ENCODE measurements at regions of chr16 and their contacts with region 1.

Region 1: DNA sequence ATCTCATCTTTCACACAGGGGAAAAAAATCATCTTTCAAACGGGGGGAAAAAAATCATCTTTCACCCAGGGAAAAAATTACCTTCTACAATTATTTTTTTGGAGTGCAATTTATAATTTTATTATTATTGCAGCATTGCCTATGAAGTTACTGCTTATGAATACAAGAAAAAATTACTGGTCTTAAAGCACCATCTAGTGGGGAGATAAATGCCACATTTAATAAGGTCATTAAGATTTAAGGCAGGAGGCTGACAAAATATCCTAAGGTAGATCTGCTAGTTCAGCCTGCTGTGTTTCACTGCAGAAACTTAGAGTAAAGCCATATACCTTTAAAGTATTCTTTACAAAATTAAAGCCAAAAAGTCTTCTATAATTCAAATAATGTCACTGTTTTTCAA is 13.7 kb downstream of the SHCBP1 start:
- DNase-seq: no peak

Region 2: GRCh38 chr16:46555951-46556350 is 51.6 kb before region 1 on chr16:
- intact Hi-C with region 1: loop called (anchors 5 kb)
- DNase-seq: no peak

Measured in cardiac septum (tissue), 1 donor.